ENCODE measurements at regions of chr17 and their contacts with region 1.

Region 1: GRCh38 chr17:1908699-1909309 is 79.0 kb downstream of the RPA1 start:
- DNase-seq: peak; percentile 85
- H3K4me3 ChIP-seq: peak overlapping the region; percentile 62
- H3K27ac ChIP-seq: no peak overlapping the region
- H3K4me1 ChIP-seq: 0 out of 2 replicates have a peak, but pooled peaks cover 9% of the 10 kb centered on the region
- H3K27me3 ChIP-seq: peaks cover 46% of the 10 kb centered on the region

Region 2: GRCh38 chr17:2029911-2030778 is 121.3 kb after region 1 on chr17 and contains the start of gene DPH1:
- in situ Hi-C with region 1: loop called (anchors 5 kb)
- DNase-seq: peak; percentile 98
- H3K4me3 ChIP-seq: peak within 1 kb of the TSS; percentile 96
- H3K27ac ChIP-seq: peak within 1 kb of the TSS; percentile 84
- H3K4me1 ChIP-seq: peaks cover 26% of the 10 kb centered on the region
- H3K27me3 ChIP-seq: no peaks in the 10 kb centered on the region; the same call in 1 of the 2 replicates
- total RNA-seq, gene DPH1: 51.2 and 58.1 TPM in 2 replicates

Region 3: DNA sequence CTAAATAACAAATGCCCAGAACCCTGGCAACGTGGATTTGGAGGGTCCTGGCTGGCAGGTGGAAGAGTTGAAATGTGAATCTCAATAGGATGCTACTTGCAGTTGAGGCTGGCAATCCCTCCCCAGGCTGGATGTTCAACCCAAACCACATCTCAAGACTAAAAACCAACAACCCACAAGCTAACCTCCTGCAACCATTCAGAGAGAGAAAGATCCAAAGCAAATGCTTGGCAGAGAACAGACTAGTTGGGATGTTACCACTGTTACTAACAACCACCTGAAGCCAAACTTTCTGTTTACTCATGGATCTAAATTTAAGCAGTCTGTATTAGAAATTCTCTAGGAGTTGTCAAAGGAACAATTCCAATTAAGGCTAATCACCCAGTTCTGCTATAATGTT is 366.9 kb after region 1 on chr17:
- in situ Hi-C with region 1: loop called (anchors 10 kb)
- DNase-seq: no peak
- H3K4me3 ChIP-seq: no peak overlapping the region
- H3K27ac ChIP-seq: no peak overlapping the region
- H3K4me1 ChIP-seq: no peaks in the 10 kb centered on the region
- H3K27me3 ChIP-seq: no peaks in the 10 kb centered on the region

Measured in GM23248 (cell line).